Kidney (tissue), 22 donors: ENCODE measurements at regions of chr12 and their contacts with region 1.

Region 1: DNA sequence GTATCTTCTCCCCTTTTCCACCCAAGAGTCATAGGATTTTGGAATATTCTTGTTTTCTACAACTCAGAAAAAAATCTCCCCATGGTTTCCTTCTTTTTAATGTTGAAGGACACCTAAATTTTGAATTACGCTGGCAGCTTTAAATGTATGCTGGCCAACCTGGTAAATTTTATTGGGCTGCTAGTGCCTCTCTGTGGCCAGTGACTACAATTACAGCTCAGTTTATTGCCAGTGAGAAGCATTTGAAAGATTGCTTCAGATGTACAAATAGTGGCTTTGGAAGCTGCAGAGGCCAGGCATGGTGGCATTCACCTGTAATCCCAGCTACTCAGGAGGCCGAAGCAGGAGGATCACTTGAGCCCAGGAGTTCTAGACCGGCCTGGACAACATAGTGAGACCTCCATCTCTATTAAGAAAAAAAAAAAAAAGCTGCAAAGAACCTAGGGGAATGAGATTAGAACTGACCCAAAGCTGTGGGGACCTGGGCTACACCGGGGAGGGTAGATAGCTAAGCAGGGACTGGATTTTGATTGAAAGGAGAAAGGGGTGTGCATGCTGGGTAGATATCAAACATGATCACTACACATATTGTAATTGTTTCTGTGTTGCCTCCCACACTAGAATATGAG is 7.6 kb upstream of the RAB21 start:
- DNase-seq: peak in 3 of 5 donors; percentile 32 to 78 (median 66)
- H3K4me3 ChIP-seq: no peak overlapping the region
- H3K27ac ChIP-seq: no peak overlapping the region
- H3K4me1 ChIP-seq: no peaks in the 10 kb centered on the region
- H3K27me3 ChIP-seq: no peaks in the 10 kb centered on the region
- CTCF ChIP-seq: peak; percentile 83

Region 2: GRCh38 chr12:71426300-71427047 is 320.6 kb before region 1 on chr12:
- intact Hi-C with region 1: loop called (anchors 10 kb)
- DNase-seq: no peak
- H3K4me3 ChIP-seq: no peak overlapping the region
- H3K27ac ChIP-seq: no peak overlapping the region
- H3K4me1 ChIP-seq: no peaks in the 10 kb centered on the region
- H3K27me3 ChIP-seq: no peaks in the 10 kb centered on the region
- CTCF ChIP-seq: no peak

Region 3: GRCh38 chr12:71684081-71684480 is 63.0 kb before region 1 on chr12:
- intact Hi-C with region 1: no loop called
- DNase-seq: no peak
- H3K4me3 ChIP-seq: peak overlapping the region in 1 of 3 donors; percentile 33
- H3K27ac ChIP-seq: no peak overlapping the region
- H3K4me1 ChIP-seq: peaks cover 0 to under 1% (median 0%) of the 10 kb centered on the region in 3 donors
- H3K27me3 ChIP-seq: no peaks in the 10 kb centered on the region
- CTCF ChIP-seq: no peak

Region 4: GRCh38 chr12:71981149-71981548 is 234.1 kb after region 1 on chr12:
- intact Hi-C with region 1: no loop called
- DNase-seq: peak in 2 of 5 donors; percentile 10 to 21
- H3K4me3 ChIP-seq: no peak overlapping the region
- H3K27ac ChIP-seq: no peak overlapping the region
- H3K4me1 ChIP-seq: no peaks in the 10 kb centered on the region
- H3K27me3 ChIP-seq: no peaks in the 10 kb centered on the region
- CTCF ChIP-seq: no peak